ENCODE measurements at regions of chr3 and their contacts with region 1.

Region 1: GRCh38 chr3:59064276-59064675 is 14.5 kb upstream of the CFAP20DC start:
- DNase-seq: no peak
- H3K4me3 ChIP-seq: no peak overlapping the region
- H3K4me3 Mint-ChIP-seq: no peak overlapping the region
- H3K27ac ChIP-seq: no peak overlapping the region
- H3K27ac Mint-ChIP-seq: no peak overlapping the region
- H3K4me1 ChIP-seq: no peaks in the 10 kb centered on the region
- H3K4me1 Mint-ChIP-seq: no peaks in the 10 kb centered on the region
- H3K27me3 ChIP-seq: no peaks in the 10 kb centered on the region
- H3K27me3 Mint-ChIP-seq: peaks cover 0 to 2% (median 1%) of the 10 kb centered on the region in 3 donors
- CTCF ChIP-seq: no peak

Region 2: GRCh38 chr3:58635371-58636285 is 428.6 kb before region 1 on chr3:
- intact Hi-C with region 1: loop called in 1 of 2 experiments (anchors 5 kb)
- DNase-seq: no peak
- H3K4me3 ChIP-seq: no peak overlapping the region
- H3K4me3 Mint-ChIP-seq: no peak overlapping the region
- H3K27ac ChIP-seq: no peak overlapping the region
- H3K27ac Mint-ChIP-seq: no peak overlapping the region
- H3K4me1 ChIP-seq: peaks cover under 1 to 2% of the 10 kb centered on the region in 2 donors
- H3K4me1 Mint-ChIP-seq: peaks cover under 1% of the 10 kb centered on the region
- H3K27me3 ChIP-seq: no peaks in the 10 kb centered on the region
- H3K27me3 Mint-ChIP-seq: peaks cover 4 to 9% (median 4%) of the 10 kb centered on the region in 3 donors
- CTCF ChIP-seq: no peak